Posterior cingulate gyrus (tissue), 11 donors: ENCODE measurements at regions of chr9 and their contacts with region 1.

Region 1: GRCh38 chr9:121059998-121060636 is 10.0 kb upstream of the C5 start:
- DNase-seq: peak in 1 of 10 donors; percentile 20

Region 2: DNA sequence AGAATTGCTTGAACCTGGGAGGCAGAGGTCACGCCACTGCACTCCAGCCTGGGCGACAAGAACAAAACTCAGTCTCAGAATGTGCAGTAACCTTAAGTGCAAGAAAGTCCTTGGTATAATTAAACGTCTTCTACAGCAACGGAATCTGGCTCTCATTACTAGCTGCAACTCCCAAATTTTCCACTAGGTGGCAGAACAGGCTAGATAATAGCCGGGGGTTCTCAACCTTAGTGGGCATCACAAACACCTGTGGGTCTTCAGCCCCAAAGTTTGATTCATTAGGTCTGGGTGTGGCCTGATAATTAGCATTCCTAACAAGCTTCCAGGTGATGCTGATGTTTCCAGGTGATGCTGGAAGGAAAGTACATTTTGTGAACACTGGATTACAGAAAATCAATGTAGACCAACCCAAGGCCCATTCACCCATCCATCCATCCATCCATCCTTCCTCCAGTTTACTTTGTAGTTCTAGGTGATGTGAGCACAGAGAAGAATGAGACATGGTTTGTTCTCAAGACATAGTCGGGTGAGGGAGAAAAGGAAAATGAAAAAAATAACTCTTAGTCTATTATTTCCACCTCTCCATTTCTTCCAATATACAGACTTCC is 304.2 kb before region 1 on chr9:
- intact Hi-C with region 1: loop called (anchors 5 kb)
- DNase-seq: peak in 4 of 10 donors; percentile 53 to 63 (median 58)

Region 3: DNA sequence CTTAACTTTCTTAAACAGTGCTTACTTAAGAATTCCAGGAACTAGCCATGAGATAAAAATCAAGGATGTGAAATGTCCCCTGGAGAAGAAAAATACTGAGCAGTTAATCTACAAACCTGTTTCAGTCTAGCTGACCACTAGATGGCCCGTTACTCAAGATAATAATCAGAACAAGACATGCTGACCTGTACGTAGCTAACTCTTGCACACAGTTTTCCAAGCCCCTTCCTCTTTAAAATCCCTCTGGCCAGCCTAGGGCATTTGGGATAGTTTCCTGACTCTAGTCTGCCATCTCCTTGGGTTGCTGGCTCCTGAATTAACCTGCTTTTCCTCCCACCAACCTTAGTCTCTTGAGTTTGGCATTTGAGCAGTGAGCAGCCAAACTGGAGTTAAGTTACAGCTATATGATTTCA is 74.3 kb before region 1 on chr9:
- intact Hi-C with region 1: loop called (anchors 5 kb)
- DNase-seq: peak in 1 of 10 donors; percentile 14

Region 4: DNA sequence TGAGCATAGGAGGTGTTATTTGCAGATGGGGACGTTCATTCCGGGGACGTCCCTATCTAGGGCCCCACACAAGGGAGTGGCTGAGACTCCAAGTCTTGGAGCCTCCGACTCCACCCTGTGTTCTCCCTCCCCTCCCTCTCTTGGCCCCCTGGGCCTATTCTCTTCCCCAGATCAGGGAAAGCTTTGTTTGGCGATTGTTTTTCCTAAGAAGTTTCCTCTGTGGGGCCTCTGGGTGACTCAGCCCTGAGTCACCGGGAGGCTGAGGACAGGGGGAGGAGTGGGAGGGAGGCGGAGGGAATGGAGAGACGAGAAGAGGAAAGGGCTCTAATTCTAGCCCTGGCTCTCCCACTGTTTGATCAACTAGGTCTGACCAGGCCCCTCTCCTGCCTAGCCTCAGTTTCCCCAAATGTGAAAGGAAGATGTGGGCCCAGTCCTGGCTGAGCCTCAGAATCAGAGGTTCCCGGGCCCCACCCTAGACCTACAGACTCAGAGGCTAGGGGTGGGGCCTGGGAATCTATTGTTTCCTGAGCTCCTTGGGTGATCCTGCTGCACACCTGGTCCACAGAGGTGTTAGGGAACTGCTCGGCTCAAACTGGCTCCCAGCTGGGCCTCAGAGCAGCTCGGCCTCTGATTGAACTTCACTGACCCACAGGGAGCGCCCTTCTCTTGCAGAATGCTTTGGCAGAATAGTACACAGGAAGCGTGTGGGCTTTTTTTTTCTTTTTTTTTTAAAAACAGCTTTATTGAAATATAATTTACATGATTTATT is 227.0 kb after region 1 on chr9:
- intact Hi-C with region 1: no loop called
- DNase-seq: peak in 7 of 10 donors; percentile 55 to 96 (median 72)

Region 5: GRCh38 chr9:121297389-121297788 is 237.3 kb after region 1 on chr9:
- intact Hi-C with region 1: no loop called
- DNase-seq: no peak